A673 (cell line): ENCODE measurements at regions of chr1 and their contacts with region 1.

Region 1: DNA sequence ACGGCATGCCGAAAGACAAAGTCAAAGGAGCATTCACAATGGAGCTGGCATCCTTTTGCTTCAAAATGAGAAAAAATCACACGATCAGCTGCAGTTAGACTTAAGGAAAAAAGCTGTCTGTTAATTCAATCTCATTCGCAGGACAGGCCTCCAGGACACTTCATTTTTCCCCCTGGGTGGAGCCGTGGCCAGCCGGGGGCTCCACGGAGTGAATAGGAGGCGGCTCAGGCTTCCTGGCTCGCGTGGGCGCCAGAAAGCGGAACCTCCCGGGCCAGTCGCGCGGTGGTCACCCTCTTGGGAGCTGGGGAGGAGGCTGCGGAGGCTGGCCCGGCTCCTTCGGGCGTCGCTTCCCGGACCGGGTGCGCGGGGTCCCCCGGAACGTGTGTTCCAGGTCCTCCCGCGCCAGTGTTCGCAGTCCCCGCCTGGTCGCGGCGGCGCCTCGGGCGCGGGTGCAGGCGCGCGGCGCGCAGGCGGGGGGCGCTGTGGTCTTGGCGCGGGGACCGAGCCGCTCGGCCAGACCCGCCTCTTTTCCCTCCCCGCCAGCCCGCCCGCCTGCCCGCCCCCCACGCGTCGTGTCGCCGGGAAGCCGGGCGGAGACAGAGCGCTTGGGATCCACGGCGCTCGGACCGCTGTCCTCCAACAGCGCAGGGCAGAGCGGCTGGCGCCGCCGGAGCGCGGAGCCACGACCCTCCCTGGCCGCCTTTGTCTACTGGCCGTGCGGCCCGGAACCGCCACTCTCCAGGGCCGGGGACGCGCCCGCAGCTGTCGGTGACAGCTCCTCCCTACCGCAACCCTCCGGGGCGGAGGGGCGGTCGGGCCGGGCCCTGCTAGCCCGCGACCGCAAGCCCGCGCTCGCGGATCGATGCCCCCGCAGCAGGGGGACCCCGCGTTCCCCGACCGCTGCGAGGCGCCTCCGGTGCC is at the start of gene RHOU:
- DNase-seq: peak; percentile 73
- H3K4me3 ChIP-seq: peak within 1 kb of the TSS; percentile 53
- H3K27ac ChIP-seq: no peak within 1 kb of the TSS
- H3K4me1 ChIP-seq: peaks cover 8% of the 10 kb centered on the region
- H3K27me3 ChIP-seq: peaks cover 45% of the 10 kb centered on the region
- CTCF ChIP-seq: peak; percentile 43; the same call in 1 of the 2 replicates
- total RNA-seq, gene RHOU: 1.2 and 1.8 TPM in 2 replicates

Region 2: DNA sequence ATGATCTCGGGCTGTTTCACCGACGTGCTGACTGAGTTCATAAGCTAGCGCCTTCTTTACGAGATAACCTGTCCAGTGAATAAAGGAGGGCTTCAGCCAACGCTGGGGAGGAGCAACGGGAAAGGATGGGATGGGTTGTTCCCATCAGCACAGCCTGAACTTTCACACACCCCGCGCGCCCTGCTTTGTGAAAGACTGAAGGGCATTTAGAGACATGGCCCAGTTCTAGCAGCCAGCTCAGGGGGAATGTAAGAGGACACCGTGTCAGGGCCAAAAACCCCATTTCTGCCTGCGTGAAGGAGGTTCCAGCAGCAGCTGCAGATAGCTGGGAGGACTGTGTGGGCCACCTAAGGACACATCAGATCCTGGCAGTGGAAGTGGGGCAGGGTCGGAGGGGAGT is 280.7 kb after region 1 on chr1:
- CTCF ChIA-PET with region 1: interaction called, 18 read pairs
- POLR2A ChIA-PET with region 1: no interaction called
- intact Hi-C with region 1: no loop called
- DNase-seq: no peak
- H3K4me3 ChIP-seq: no peak overlapping the region
- H3K27ac ChIP-seq: no peak overlapping the region
- H3K4me1 ChIP-seq: no peaks in the 10 kb centered on the region
- H3K27me3 ChIP-seq: peaks cover 2% of the 10 kb centered on the region
- CTCF ChIP-seq: no peak